Activated naive CD4-positive, alpha-beta T cell treated with anti-CD3 and anti-CD28 coated beads for 36 hours (primary cell): ENCODE measurements at regions of chr12 and their contacts with region 1.

Region 1: DNA sequence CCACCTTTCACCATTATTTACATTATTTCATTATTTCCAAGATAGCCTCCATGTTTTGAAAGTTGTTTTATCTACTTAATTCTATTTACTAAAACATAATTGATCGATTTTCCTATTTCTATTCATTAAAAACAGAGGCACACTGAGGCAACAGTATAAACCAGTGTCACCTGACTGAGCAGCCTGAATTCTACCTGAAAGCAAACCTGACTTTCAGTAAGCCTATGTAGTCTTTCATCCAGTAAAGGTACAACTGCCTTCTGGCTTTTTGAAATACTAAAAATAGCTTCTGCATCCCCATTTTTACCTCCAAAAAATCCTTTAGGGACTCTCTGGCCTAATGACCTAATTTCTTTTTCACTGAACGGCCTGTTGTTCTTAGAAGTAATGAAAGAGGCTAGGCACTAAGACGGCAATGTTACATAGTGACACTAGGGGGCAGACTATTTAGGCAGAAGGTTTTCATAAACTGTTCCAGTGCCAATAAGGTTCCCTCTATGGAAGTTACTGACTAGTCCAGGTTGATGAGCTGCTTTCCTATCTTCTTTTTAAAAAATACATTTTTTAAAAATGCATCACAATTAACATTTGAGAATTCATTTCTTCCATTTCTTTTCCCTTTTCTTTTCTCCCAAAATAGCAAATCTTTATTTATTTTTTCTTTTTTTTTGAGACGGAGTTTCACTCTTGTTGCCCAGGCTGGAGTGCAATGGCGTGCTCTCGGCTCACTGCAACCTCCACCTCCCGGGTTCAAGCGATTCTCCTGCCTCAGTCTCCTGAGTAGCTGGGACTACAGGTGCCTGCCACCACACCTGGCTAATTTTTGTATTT is 17.5 kb downstream of the ANAPC5 start:
- DNase-seq: peak; percentile 25
- H3K4me3 Mint-ChIP-seq: no peak overlapping the region
- H3K27ac Mint-ChIP-seq: no peak overlapping the region
- H3K4me1 Mint-ChIP-seq: no peaks in the 10 kb centered on the region
- H3K27me3 Mint-ChIP-seq: no peaks in the 10 kb centered on the region

Region 2: DNA sequence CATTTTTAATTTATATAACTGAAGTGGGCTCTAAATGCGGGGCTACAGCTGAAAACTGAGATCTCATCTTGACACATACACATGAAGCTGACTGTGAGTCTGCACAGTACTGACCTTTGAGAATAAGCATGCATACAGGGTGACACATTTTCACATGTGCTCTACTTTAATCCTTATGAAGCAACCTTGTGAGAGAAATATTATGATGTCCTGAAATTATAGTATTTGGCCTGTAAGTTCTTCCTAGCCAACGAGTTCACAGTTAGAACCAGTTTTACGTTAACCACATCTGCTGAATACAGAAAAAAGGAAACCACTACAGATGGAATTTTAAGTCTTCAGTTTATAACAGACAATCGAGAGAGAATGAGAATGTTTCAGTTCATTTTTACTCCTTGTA is 500.9 kb before region 1 on chr12:
- CTCF ChIA-PET with region 1: no interaction called
- intact Hi-C with region 1: no loop called
- DNase-seq: no peak
- H3K4me3 Mint-ChIP-seq: no peak overlapping the region
- H3K27ac Mint-ChIP-seq: no peak overlapping the region
- H3K4me1 Mint-ChIP-seq: peaks cover 70% of the 10 kb centered on the region
- H3K27me3 Mint-ChIP-seq: no peaks in the 10 kb centered on the region

Region 3: DNA sequence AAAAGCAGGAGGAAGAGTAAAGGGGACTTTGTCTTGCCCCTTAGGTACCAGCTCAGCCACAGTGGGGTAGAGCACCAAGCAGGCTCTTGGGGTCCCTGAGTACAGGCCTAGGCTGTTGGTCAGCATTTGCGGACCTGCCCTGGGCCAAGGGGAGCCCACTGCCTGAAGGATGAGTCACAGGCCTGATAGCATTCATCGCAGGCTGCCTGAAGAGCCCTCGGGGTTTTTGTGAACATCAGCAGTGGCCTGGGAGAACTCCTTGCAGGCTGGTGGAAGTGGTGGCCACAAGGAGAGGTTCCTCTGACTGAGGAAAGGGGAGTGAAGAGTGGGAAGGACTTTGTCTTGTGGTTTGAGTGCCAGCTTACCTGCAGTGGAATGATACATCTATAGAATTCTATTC is 227.0 kb before region 1 on chr12:
- CTCF ChIA-PET with region 1: no interaction called
- intact Hi-C with region 1: no loop called
- DNase-seq: no peak
- H3K4me3 Mint-ChIP-seq: no peak overlapping the region
- H3K27ac Mint-ChIP-seq: no peak overlapping the region
- H3K4me1 Mint-ChIP-seq: peaks cover 4% of the 10 kb centered on the region
- H3K27me3 Mint-ChIP-seq: no peaks in the 10 kb centered on the region

Region 4: GRCh38 chr12:121345151-121345815 is 10.6 kb after region 1 on chr12:
- CTCF ChIA-PET with region 1: interaction called, 23 read pairs
- intact Hi-C with region 1: no loop called
- DNase-seq: no peak
- H3K4me3 Mint-ChIP-seq: no peak overlapping the region
- H3K27ac Mint-ChIP-seq: no peak overlapping the region
- H3K4me1 Mint-ChIP-seq: peaks cover 22% of the 10 kb centered on the region
- H3K27me3 Mint-ChIP-seq: no peaks in the 10 kb centered on the region

Region 5: DNA sequence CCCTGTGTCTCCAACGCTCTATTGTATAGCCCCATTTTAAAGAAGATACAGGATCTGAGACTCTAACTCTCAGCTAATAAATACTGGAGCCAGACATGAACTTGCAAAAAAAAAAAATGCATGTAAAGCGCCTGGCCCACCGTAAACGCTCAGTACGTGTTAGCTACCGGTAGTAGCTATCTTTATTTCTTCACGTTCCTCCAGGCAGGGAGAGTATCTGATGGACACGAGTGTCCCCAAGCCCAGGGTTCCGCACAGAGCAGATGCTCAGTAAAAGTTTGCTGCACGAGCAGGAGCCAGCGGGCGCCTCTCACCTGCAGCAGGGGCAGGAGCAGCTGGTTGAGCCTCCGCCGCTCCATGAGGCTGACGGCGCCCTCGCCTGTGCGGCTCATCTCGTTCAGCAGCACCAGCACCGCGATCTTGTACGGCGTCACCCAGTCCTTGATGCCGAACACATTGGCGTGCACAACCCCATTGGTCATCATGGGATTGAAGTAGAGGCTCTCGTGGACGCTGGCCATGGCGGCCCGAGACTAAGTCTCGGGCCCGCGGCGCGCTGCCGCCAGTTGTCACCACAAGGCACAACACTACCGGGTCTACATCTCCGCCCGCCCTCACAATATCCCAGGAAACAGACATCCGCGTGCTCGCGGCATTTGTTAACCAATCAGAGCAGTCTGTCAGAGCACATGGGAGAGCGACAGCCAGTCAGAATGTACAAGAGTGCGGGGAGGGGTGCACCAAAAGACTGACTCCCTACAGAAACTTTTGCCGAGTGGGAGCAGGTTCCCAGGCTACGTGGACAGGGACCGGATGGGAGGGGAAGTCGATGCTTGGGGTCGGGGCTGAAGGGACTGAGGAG is 17.3 kb after region 1 on chr12 and contains the start of gene ANAPC5:
- CTCF ChIA-PET with region 1: interaction called, 11 read pairs
- intact Hi-C with region 1: no loop called
- DNase-seq: peak; percentile 96
- H3K4me3 Mint-ChIP-seq: peak within 1 kb of the TSS; percentile 98
- H3K27ac Mint-ChIP-seq: peak within 1 kb of the TSS; percentile 86
- H3K4me1 Mint-ChIP-seq: peaks cover 25% of the 10 kb centered on the region
- H3K27me3 Mint-ChIP-seq: no peaks in the 10 kb centered on the region
- total RNA-seq, gene ANAPC5: 117 to 119 TPM

Region 6: DNA sequence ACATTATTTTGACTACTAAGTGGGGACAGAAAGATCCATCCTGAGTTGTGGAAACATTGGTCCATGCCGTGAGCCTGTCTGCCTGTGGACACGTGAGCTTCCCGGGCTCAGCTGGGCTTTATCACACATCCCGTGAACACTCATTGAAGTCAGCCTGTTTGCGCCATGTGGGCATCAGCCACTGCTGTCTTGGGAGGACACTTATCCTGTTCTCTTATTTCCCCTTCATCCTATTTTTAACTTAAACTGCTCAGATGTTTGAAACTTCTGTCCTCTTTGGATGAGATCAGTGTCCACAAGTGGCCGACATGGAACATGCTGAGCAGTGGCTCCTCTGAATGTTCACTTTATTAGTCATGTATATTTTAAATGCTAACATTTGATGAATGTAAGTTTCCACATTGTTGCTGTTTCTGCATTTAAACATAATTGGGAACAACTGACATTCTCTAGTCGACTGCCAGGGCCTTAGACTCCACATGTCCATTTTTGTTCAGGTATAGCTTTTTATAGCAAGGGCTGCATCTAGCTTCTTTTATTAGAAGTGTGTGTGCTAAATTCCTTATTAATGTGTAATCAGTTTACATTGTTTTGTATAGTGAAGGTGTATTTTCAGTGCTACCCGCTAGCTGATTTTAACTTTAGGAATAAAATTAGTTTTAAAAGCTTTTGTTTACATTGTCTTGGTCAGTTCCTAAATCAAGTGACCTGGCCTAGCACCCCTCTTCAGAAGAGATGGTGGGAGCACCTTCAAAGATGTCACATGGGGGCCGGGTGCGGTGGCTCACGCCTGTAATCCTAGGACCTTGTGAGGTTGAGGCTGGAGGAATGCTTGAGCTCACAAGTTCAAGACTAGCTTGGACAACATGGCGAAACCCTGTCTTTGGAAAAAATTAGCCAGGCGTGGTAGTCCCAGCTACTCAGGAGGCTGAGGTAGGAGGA is 89.2 kb after region 1 on chr12:
- CTCF ChIA-PET with region 1: interaction called, 15 read pairs
- intact Hi-C with region 1: no loop called
- DNase-seq: no peak
- H3K4me3 Mint-ChIP-seq: no peak overlapping the region
- H3K27ac Mint-ChIP-seq: no peak overlapping the region
- H3K4me1 Mint-ChIP-seq: no peaks in the 10 kb centered on the region
- H3K27me3 Mint-ChIP-seq: no peaks in the 10 kb centered on the region

Region 7: DNA sequence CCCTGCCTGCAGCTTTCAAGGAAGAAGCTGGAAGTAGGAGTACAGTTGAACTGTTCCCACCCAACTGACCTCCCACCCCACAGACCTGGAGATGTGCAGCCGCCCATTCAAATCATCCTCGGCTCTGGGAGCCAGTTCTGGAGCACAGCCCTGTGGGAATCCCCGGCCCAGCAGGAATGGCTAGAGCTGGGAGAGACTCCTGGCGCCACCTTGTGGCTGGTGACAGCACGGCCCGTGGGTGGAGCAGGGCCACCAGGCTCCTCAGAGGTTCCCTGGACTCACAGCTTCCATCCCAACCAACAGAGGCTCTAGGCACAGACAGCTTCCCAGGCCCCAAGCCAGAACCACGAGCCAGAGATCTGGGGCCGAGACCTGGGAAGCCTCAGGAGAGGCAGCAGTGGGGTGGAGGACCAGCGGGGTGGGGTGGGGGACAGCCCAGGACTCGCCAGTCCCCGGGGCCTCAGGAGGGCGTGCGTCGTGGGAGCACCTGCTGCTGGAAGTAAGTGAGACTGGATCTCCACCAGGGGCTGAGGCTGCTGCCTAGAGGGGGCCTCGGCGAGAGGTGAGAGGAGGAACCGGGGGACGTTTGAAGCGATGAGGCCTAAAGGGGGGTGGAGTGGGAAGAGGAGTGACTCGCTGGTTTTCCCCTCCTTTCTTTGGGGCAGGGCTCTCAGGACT is 108.6 kb after region 1 on chr12:
- CTCF ChIA-PET with region 1: interaction called, 99 read pairs
- intact Hi-C with region 1: loop called (anchors 1 kb)
- DNase-seq: peak; percentile 81
- H3K4me3 Mint-ChIP-seq: no peak overlapping the region
- H3K27ac Mint-ChIP-seq: peak overlapping the region; percentile 74
- H3K4me1 Mint-ChIP-seq: peaks cover 3% of the 10 kb centered on the region
- H3K27me3 Mint-ChIP-seq: no peaks in the 10 kb centered on the region

Region 8: GRCh38 chr12:121678716-121679580 is 344.2 kb after region 1 on chr12:
- CTCF ChIA-PET with region 1: no interaction called
- intact Hi-C with region 1: loop called (anchors 1 kb)
- DNase-seq: no peak
- H3K4me3 Mint-ChIP-seq: no peak overlapping the region
- H3K27ac Mint-ChIP-seq: no peak overlapping the region
- H3K4me1 Mint-ChIP-seq: peaks cover 8% of the 10 kb centered on the region
- H3K27me3 Mint-ChIP-seq: no peaks in the 10 kb centered on the region